Vagina (tissue), 2 donors: ENCODE measurements at regions of chr10 and their contacts with region 1.

Region 1: GRCh38 chr10:122565728-122566206 is 5.2 kb downstream of the DMBT1 start:
- DNase-seq: no peak
- H3K4me3 ChIP-seq: peak overlapping the region in 1 of 2 donors; percentile 31
- H3K27ac ChIP-seq: no peak overlapping the region
- H3K4me1 ChIP-seq: peaks cover 7% of the 10 kb centered on the region
- H3K27me3 ChIP-seq: no peaks in the 10 kb centered on the region
- CTCF ChIP-seq: peak; percentile 81 to 92 (median 83)
- POLR2A ChIP-seq: no peak

Region 2: GRCh38 chr10:122098924-122099323 is 466.8 kb before region 1 on chr10:
- intact Hi-C with region 1: no loop called
- DNase-seq: no peak
- H3K4me3 ChIP-seq: no peak overlapping the region
- H3K27ac ChIP-seq: no peak overlapping the region
- H3K4me1 ChIP-seq: peaks cover 6% of the 10 kb centered on the region
- H3K27me3 ChIP-seq: no peaks in the 10 kb centered on the region
- CTCF ChIP-seq: no peak
- POLR2A ChIP-seq: no peak

Region 3: GRCh38 chr10:122298598-122299301 is 267.0 kb before region 1 on chr10:
- intact Hi-C with region 1: loop called (anchors 10 kb)
- DNase-seq: peak in 1 of 2 donors; percentile 85
- H3K4me3 ChIP-seq: no peak overlapping the region
- H3K27ac ChIP-seq: no peak overlapping the region
- H3K4me1 ChIP-seq: no peaks in the 10 kb centered on the region
- H3K27me3 ChIP-seq: no peaks in the 10 kb centered on the region
- CTCF ChIP-seq: peak; percentile 85 to 94 (median 93)
- POLR2A ChIP-seq: no peak

Region 4: GRCh38 chr10:122342293-122343134 is 223.3 kb before region 1 on chr10:
- intact Hi-C with region 1: loop called (anchors 1 kb)
- DNase-seq: peak in 1 of 2 donors; percentile 83
- H3K4me3 ChIP-seq: no peak overlapping the region
- H3K27ac ChIP-seq: no peak overlapping the region
- H3K4me1 ChIP-seq: peaks cover 27% of the 10 kb centered on the region
- H3K27me3 ChIP-seq: no peaks in the 10 kb centered on the region
- CTCF ChIP-seq: peak in 2 of 3 experiments; percentile 62 to 79
- POLR2A ChIP-seq: no peak

Region 5: GRCh38 chr10:122374237-122374869 is 191.4 kb before region 1 on chr10 and contains the start of gene PLEKHA1:
- intact Hi-C with region 1: no loop called
- DNase-seq: peak in 1 of 2 donors; percentile 96
- H3K4me3 ChIP-seq: peak within 1 kb of the TSS; percentile 80 to 90
- H3K27ac ChIP-seq: peak within 1 kb of the TSS; percentile 96
- H3K4me1 ChIP-seq: peaks cover 23% of the 10 kb centered on the region
- H3K27me3 ChIP-seq: no peaks in the 10 kb centered on the region
- CTCF ChIP-seq: no peak
- POLR2A ChIP-seq: peak in 1 of 2 donors; percentile 86
- total RNA-seq, gene PLEKHA1: 28.7 TPM

Region 6: DNA sequence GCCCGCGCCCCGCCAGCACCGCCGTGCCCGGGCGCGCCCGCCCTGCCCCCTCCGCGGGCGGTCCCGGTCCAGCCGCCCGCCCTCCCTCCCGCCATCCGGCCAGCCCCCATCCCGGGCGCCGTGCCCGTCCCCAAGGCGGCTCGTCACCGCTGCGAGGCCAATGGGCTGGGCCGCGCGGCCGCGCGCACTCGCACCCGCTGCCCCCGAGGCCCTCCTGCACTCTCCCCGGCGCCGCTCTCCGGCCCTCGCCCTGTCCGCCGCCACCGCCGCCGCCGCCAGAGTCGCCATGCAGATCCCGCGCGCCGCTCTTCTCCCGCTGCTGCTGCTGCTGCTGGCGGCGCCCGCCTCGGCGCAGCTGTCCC is 104.4 kb before region 1 on chr10 and contains the start of gene HTRA1:
- intact Hi-C with region 1: loop called (anchors 10 kb)
- DNase-seq: no peak
- H3K4me3 ChIP-seq: peak within 1 kb of the TSS; percentile 75 to 94
- H3K27ac ChIP-seq: peak within 1 kb of the TSS; percentile 93
- H3K4me1 ChIP-seq: peaks cover 42% of the 10 kb centered on the region
- H3K27me3 ChIP-seq: no peaks in the 10 kb centered on the region
- CTCF ChIP-seq: no peak
- POLR2A ChIP-seq: peak in 1 of 2 donors; percentile 60
- total RNA-seq, gene HTRA1: 116 TPM

Region 7: GRCh38 chr10:122590153-122590552 is 24.4 kb after region 1 on chr10:
- intact Hi-C with region 1: no loop called
- DNase-seq: no peak
- H3K4me3 ChIP-seq: no peak overlapping the region
- H3K27ac ChIP-seq: no peak overlapping the region
- H3K4me1 ChIP-seq: no peaks in the 10 kb centered on the region
- H3K27me3 ChIP-seq: no peaks in the 10 kb centered on the region
- CTCF ChIP-seq: no peak
- POLR2A ChIP-seq: no peak

Region 8: GRCh38 chr10:122953827-122954730 is 388.3 kb after region 1 on chr10 and contains the start of gene C10orf88:
- intact Hi-C with region 1: no loop called
- DNase-seq: peak in 1 of 2 donors; percentile 95
- H3K4me3 ChIP-seq: peak within 1 kb of the TSS; percentile 75 to 78
- H3K27ac ChIP-seq: peak within 1 kb of the TSS; percentile 71
- H3K4me1 ChIP-seq: peaks cover 19% of the 10 kb centered on the region
- H3K27me3 ChIP-seq: no peaks in the 10 kb centered on the region
- CTCF ChIP-seq: no peak
- POLR2A ChIP-seq: no peak
- total RNA-seq, gene C10orf88: 5.6 TPM